Naive thymus-derived CD4-positive, alpha-beta T cell (primary cell): ENCODE measurements at regions of chr4 and their contacts with region 1.

Region 1: DNA sequence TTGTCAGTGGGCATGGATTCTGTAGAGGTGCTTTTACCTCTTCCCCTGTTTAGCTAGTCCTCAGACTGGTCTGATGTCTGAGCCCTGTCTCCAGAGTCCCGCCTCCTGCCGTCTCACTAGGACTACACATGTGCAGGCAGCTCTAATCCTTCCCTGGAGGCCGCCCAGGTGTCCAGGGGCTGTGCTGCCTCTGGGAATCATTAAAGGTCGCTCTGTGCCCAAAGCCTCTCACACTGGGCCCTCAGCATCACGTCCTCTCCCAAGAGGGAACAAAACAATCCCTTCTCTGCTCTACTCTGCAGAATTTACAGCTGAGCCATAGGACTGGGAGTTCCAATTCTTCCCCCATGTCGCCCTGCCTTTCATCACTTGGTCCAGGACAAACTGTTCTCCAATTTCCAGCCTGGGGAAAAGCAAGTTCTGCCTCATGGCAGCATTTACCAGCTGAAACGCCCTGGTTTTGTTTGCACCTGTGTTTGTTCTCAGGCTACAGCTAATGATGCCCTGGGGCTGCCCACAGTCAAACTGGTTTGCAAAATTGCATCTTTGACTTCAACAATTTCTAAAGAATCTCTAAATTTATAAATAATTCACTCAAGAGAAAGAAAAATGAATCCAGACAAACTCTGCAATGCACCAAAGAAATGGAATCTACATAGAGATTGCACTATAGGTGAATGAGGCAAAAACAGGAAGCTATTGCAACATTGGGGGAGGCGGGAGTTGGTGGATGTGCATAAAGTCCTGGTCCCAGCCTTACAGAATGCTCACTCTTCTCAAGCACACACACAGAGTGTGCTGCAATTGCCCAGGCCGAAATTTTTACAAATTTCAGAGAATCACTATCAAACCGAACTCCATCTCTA is 7.2 kb upstream of the MRFAP1 start:
- DNase-seq: no peak
- ATAC-seq: peak; percentile 50
- H3K4me3 ChIP-seq: no peak overlapping the region
- H3K4me3 Mint-ChIP-seq: no peak overlapping the region
- H3K27ac ChIP-seq: no peak overlapping the region
- H3K27ac Mint-ChIP-seq: no peak overlapping the region
- H3K4me1 ChIP-seq: no peaks in the 10 kb centered on the region
- H3K4me1 Mint-ChIP-seq: peaks cover 0 to 7% (median under 1%) of the 10 kb centered on the region in 7 donors
- H3K27me3 ChIP-seq: no peaks in the 10 kb centered on the region
- H3K27me3 Mint-ChIP-seq: peaks cover 0 to 5% (median 0%) of the 10 kb centered on the region in 5 donors

Region 2: GRCh38 chr4:6595897-6596537 is 37.3 kb before region 1 on chr4:
- CTCF ChIA-PET with region 1: no interaction called
- POLR2A ChIA-PET with region 1: interaction called, 10 read pairs
- intact Hi-C with region 1: no loop called
- DNase-seq: no peak
- ATAC-seq: peak; percentile 15
- H3K4me3 ChIP-seq: no peak overlapping the region
- H3K4me3 Mint-ChIP-seq: no peak overlapping the region
- H3K27ac ChIP-seq: no peak overlapping the region
- H3K27ac Mint-ChIP-seq: no peak overlapping the region
- H3K4me1 ChIP-seq: no peaks in the 10 kb centered on the region
- H3K4me1 Mint-ChIP-seq: peaks cover 0 to 2% (median 0%) of the 10 kb centered on the region in 7 donors
- H3K27me3 ChIP-seq: no peaks in the 10 kb centered on the region
- H3K27me3 Mint-ChIP-seq: no peaks in the 10 kb centered on the region